ENCODE measurements at regions of chr17 and their contacts with region 1.

Region 1: DNA sequence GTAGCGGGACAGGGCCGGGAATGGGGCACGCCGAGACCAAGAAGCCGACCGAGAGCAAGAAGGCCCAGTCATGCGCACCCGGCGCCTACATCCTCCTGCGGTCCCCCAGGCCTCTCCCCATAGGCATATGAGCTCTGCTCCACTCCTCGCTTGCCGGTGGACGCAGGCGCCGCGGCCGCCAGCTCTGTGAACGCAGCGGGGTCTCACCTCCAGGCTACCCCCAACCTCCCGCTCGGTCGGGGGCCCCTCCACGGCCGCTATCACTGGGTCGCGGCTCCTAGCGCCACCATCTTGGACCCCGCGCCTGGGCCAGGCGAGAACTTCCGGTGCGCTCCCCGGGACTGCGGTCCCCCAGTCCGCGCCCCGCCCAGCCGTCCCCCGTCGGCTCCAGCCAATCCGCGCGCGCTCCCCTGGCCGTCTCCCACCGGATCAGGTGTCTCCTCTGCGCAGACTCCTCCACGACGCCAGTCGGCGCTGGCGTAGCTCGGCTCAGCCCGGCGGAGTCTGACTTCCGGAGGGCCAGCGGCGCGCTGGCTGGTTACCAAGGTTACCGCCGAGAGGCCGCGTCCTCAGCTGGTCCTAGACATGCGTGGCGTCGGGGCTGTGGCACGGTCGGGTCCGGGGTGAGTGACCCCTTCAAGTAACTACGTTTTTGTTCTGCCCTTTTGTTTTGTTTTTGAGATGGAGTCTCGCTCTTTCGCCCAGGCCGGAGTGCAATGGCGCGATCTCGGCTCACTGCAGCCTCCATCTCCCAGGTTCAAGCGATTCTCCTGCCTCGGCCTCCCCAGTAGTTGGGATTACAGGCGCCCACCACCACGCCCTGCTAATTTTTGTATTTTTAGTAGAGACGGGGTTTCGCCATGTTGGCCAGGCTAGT is at the start of gene ZNF594:
- DNase-seq: peak; percentile 93
- ATAC-seq: peak; percentile 99
- H3K4me3 ChIP-seq: peak within 1 kb of the TSS; percentile 90 to 94
- H3K27ac ChIP-seq: peak within 1 kb of the TSS; percentile 84
- H3K4me1 ChIP-seq: peaks cover 0 to 17% of the 10 kb centered on the region in 2 experiments; a peak in 2 of 4 replicates
- H3K27me3 ChIP-seq: no peaks in the 10 kb centered on the region
- CTCF ChIP-seq: peak; percentile 58 to 77 (median 65)
- POLR2A ChIP-seq: no peak
- RAD21 ChIP-seq: 0 out of 2 replicates have a peak, but pooled peaks have one; percentile 18
- total RNA-seq, gene ZNF594: 8.3 TPM

Region 2: DNA sequence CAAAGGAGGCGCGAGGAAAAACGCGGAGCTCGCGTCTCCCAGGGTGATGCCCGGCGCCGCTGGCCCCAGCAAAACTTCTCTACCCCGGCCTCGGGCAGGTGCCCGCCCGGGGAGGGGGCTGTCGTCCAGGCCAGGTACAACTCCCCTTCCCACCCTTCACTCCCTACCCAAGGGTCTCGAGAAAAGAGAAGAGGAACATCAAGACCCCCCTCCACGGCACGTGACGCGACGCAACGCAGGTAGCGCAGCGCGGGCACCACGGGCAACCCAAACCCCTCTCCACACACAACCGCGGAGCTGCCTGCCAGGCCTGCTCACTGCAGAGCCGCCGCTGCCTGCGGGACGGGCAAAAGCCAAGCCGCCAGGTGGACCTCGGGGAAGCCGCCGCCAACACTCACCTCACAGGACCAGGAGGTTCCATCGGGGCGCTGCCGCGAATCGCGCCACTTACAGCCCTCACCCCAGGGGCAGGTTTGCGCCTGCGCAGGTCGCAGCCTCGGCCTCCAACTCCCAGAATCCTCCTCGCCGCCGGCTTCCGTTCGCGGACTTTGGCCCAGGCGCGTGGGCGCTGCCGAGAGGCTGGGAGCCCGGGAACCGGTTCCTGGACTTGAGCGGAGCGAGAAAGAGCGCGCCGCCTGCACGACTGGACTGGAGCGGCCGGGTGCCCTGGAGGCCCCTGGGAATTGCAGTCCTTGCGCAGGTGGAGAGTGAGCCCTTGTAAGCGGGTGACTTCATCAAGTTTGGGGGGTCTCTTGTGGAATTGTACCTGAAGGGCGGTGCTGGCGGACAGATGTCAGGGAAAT is 80.2 kb before region 1 on chr17 and contains the start of gene ZNF232:
- CTCF ChIA-PET with region 1: no interaction called
- POLR2A ChIA-PET with region 1: no interaction called
- RAD21 ChIA-PET with region 1: no interaction called
- intact Hi-C with region 1: loop called (anchors 10 kb)
- DNase-seq: peak; percentile 91
- ATAC-seq: peak; percentile 91
- H3K4me3 ChIP-seq: peak within 1 kb of the TSS; percentile 66 to 72
- H3K27ac ChIP-seq: peak within 1 kb of the TSS; percentile 66
- H3K4me1 ChIP-seq: peaks cover 0 to 15% of the 10 kb centered on the region in 2 experiments; a peak in 2 of 4 replicates
- H3K27me3 ChIP-seq: no peaks in the 10 kb centered on the region
- CTCF ChIP-seq: no peak
- POLR2A ChIP-seq: peak; percentile 35
- RAD21 ChIP-seq: no peak
- total RNA-seq, gene ZNF232: 11.1 TPM

Region 3: DNA sequence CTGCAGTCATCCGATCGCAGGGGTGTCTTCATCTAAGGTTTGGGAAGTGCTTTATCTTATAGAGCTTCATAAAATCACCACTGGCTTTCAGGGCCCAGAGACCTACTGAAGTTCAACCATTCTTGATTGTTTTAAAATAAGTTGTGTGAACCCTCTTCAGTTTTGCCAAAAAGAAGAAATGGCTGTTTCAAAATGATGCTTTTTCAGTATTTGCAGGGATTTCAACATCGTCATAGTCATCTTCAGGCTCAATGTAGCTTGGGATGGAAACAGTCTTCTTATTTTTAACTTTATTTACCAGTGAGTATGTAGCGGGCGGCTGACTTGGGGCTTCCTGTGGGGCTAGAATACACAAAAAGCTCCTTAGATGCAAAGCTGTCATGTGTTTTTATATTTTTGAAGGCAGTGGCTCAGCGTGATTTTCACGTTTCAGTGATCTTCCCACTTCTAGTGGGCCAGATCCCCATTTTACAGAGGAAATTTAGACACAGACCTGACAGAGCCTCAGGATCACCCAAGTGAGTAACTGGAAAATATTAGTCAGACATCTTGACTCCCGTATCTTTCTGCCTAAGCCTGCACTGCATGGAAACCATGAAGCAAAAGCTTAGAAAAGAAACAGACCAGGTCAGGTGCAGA is 19.0 kb after region 1 on chr17:
- CTCF ChIA-PET with region 1: no interaction called
- POLR2A ChIA-PET with region 1: no interaction called
- RAD21 ChIA-PET with region 1: no interaction called
- intact Hi-C with region 1: no loop called
- DNase-seq: no peak
- ATAC-seq: no peak
- H3K4me3 ChIP-seq: no peak overlapping the region
- H3K27ac ChIP-seq: no peak overlapping the region
- H3K4me1 ChIP-seq: no peaks in the 10 kb centered on the region
- H3K27me3 ChIP-seq: no peaks in the 10 kb centered on the region
- CTCF ChIP-seq: no peak
- POLR2A ChIP-seq: no peak
- RAD21 ChIP-seq: no peak

Measured in HCT116 (cell line).